Panc1 (cell line): ENCODE measurements at regions of chr7 and their contacts with region 1.

Region 1: DNA sequence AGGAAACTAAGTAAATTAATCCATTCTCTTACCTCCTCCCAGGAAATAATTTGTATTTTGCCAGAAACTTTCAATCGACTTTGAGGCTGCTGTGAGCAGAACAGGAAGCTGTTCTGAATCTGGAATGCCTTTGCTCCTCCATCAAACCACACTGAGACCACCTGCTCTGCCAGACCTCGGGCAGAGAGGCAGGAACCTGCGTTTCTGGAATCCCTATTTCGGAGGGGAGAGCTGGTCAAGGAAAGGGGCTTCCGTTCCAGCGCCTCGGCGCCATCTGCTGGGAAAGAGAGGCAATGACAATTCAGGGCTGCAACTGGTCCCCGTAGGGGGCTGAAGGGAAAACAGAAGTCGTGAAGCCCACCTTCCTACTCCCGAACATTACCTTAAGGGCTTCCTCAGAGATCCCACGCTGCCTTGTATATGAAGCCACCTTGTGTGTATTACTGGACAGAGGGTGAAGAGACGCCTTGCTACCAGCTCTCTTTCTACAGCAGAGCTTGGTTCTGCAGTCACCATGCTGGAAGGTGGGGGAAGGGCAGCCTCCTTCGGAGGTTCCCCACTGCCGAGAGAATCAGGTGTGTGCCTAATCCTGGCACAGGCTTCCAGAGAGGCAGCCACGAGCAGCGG is 31.2 kb downstream of the ZNF467 start:
- DNase-seq: peak; percentile 64
- ATAC-seq: peak; percentile 93
- H3K4me3 ChIP-seq: peak overlapping the region; percentile 44 to 65
- H3K27ac ChIP-seq: peak overlapping the region; percentile 56; the same call in 1 of the 2 replicates
- H3K4me1 ChIP-seq: no peaks in the 10 kb centered on the region; the same call in 1 of the 2 replicates
- H3K27me3 ChIP-seq: no peaks in the 10 kb centered on the region
- CTCF ChIP-seq: peak; percentile 96

Region 2: DNA sequence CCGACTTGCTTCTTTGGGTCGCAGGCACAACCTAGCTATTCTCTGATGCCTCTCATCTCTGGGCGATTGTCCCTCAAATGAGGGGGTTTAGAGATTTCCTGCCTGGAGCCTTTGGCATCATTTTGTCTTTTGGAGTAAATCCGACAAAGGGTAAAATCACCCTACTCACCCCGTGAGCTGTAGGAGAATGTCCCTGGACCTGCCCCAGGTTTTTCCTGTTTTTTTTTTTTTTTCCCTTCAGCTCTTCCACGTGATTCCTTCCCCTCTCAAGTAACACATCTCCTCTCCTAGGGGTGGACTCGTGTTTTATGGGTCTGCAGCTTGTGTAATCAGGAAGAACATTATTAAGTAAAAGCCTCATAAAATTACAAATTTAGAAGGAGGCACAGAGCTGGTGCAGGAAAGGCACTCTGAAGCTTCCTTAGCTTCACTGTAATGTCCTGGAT is 116.2 kb before region 1 on chr7:
- CTCF ChIA-PET with region 1: no interaction called
- POLR2A ChIA-PET with region 1: no interaction called
- in situ Hi-C with region 1: no loop called
- intact Hi-C with region 1: no loop called
- DNase-seq: no peak
- ATAC-seq: no peak
- H3K4me3 ChIP-seq: 0 out of 4 replicates have a peak overlapping the region, but pooled peaks of 1 of the 2 experiments have one; percentile 5
- H3K27ac ChIP-seq: no peak overlapping the region
- H3K4me1 ChIP-seq: peaks cover 8% of the 10 kb centered on the region; the same call in 1 of the 2 replicates
- H3K27me3 ChIP-seq: peaks cover 2% of the 10 kb centered on the region; the same call in 1 of the 2 replicates
- CTCF ChIP-seq: no peak; the same call in 1 of the 2 replicates

Region 3: DNA sequence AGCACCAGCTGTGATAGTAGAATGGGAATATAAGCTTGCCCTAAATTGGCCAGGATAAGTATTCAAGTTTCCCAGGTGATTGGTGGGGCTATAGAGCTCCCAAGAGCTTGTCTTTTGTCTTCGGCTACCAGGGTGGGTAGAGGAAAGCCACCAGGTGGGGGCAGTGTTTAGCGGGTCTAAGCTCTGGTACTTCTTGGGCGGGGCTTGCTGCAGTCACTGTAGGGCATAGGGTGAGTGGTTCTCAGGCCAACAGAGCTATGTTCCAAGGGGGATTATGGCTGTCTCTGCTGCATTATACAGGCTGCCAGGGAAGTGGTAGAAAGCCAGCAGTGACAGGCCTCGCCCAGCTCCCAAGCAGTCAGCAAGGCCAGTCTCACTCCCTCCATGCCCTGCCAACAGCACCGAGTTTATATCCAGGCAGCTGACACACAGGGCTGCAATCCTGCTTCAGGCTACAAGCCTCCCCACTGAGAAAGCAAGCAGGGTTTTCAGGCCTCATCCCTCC is 79.5 kb before region 1 on chr7:
- CTCF ChIA-PET with region 1: interaction called, 25 read pairs
- POLR2A ChIA-PET with region 1: interaction called, 5 read pairs
- in situ Hi-C with region 1: no loop called
- intact Hi-C with region 1: no loop called
- DNase-seq: peak; percentile 43
- ATAC-seq: peak; percentile 94
- H3K4me3 ChIP-seq: no peak overlapping the region
- H3K27ac ChIP-seq: no peak overlapping the region
- H3K4me1 ChIP-seq: no peaks in the 10 kb centered on the region
- H3K27me3 ChIP-seq: no peaks in the 10 kb centered on the region; the same call in 1 of the 2 replicates
- CTCF ChIP-seq: peak; percentile 67

Region 4: DNA sequence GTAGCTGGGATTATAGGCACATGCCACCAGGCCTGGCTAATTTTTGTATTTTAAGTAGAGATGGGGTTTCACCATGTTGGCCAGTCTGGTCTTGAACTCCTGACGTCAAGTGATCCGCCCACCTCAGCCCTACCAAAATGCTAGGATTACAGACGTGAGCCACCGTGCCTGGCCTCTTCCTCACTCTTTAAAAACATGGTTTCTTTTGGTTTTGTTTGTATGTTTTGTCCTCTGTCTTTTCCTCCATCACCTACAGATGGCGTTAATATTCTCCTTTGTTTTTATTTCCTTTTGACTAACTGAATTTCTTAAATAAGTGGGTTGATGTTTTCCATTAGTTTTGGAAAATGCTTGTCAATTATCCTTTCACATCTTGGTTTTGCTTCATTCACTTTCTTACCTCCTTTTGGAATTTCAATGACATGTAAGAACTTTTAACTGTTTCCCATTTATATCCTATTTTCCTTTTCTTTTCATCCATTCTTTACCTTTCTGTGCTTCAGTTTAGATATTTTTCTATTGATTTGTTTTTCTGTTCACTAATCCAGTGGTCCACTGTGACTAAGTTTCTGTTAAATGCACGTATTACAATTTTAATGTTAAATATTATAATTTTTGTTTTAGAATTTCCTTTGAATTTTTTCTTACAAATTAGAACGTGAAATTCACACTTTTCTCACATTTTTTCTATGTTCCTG is 72.9 kb before region 1 on chr7:
- CTCF ChIA-PET with region 1: interaction called, 7 read pairs
- POLR2A ChIA-PET with region 1: no interaction called
- in situ Hi-C with region 1: no loop called
- intact Hi-C with region 1: loop called (anchors 2 kb)
- DNase-seq: peak; percentile 27
- ATAC-seq: no peak
- H3K4me3 ChIP-seq: no peak overlapping the region
- H3K27ac ChIP-seq: no peak overlapping the region
- H3K4me1 ChIP-seq: no peaks in the 10 kb centered on the region; the same call in 1 of the 2 replicates
- H3K27me3 ChIP-seq: 0 out of 2 replicates have a peak, but pooled peaks cover 4% of the 10 kb centered on the region
- CTCF ChIP-seq: peak; percentile 69

Region 5: DNA sequence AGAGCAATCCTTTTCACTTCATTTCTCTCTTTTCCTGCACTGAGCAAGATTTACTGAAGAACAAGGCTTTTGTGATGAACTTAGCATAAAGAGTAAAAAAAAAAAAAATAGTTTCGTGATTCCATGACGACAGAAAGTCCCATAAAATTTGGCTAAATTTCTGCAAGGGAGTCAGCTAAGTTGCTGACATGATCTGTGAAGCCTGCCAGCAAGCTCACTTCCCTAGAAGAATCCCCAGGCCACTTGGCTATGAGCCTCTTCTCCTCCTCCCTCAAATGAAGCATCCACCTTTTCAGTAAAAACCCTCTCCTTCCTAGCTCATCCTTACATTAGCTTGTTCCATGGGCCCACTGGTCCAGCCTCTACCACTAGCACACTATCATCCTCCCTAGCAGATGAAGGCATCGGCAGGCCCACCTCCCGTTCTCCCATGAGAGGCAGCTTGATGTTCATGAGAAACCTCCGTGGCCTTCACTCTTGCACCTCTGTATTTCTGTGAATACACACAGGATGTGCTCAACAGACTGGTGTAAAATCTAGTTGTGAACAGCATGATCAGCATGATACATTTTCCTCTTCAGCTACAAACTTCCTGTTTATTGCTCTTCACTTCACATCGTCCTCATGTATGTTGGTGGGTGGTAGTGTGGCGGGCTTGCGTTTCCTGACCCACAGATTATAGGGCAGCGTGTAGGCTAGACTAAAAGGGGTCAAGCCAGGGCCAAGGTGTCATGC is 739.2 kb after region 1 on chr7:
- CTCF ChIA-PET with region 1: no interaction called
- POLR2A ChIA-PET with region 1: no interaction called
- in situ Hi-C with region 1: no loop called
- intact Hi-C with region 1: no loop called
- DNase-seq: no peak
- ATAC-seq: no peak
- H3K4me3 ChIP-seq: no peak overlapping the region
- H3K27ac ChIP-seq: no peak overlapping the region
- H3K4me1 ChIP-seq: no peaks in the 10 kb centered on the region
- H3K27me3 ChIP-seq: peaks cover 6% of the 10 kb centered on the region
- CTCF ChIP-seq: no peak